HepG2 (cell line): ENCODE measurements at regions of chr18 and their contacts with region 1.

Region 1: GRCh38 chr18:32803568-32803967 is 30.7 kb upstream of the KLHL14 start:
- DNase-seq: peak; percentile 99
- ATAC-seq: peak; percentile 94
- H3K4me3 ChIP-seq: peak overlapping the region in 2 of 3 experiments; percentile 43 to 46; a peak in 2 of 6 replicates
- H3K27ac ChIP-seq: peak overlapping the region; percentile 99
- H3K4me1 ChIP-seq: peaks cover 86% of the 10 kb centered on the region
- H3K27me3 ChIP-seq: no peaks in the 10 kb centered on the region
- CTCF ChIP-seq: no peak
- EP300 ChIP-seq: peak; percentile 97 to 100; a peak in 3 of 4 replicates
- POLR2A ChIP-seq: peak; percentile 56 to 91
- RAD21 ChIP-seq: 0 out of 2 replicates have a peak, but pooled peaks have one; percentile 35

Region 2: DNA sequence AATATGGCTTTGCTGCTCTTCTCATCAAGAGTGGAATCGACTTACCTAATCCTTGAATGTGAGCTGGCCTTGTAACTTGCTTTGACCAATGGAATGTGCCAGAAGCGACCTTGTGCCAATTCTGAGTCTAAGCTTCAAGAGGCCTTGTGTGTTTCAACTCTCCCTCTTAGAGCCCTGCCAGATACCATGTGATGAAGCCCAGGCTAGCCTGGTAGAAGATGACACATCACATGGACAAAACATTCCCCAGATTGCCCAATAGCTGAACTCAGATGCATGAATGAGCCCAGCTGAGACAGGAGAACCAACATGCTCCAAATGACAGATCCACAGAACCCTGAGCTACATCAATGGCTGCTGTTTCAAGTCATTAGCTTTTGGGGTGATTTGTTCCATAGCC is 26.5 kb before region 1 on chr18:
- CTCF ChIA-PET with region 1: no interaction called
- POLR2A ChIA-PET with region 1: interaction called, 136 read pairs
- in situ Hi-C with region 1: no loop called
- intact Hi-C with region 1: no loop called
- DNase-seq: peak; percentile 46
- ATAC-seq: peak; percentile 60
- H3K4me3 ChIP-seq: no peak overlapping the region
- H3K27ac ChIP-seq: no peak overlapping the region
- H3K4me1 ChIP-seq: peaks cover 55% of the 10 kb centered on the region
- H3K27me3 ChIP-seq: no peaks in the 10 kb centered on the region
- CTCF ChIP-seq: no peak
- EP300 ChIP-seq: no peak
- POLR2A ChIP-seq: no peak
- RAD21 ChIP-seq: no peak